H1 (cell line): ENCODE measurements at regions of chr12 and their contacts with region 1.

Region 1: GRCh38 chr12:6451348-6452244 is at the start of gene TAPBPL:
- DNase-seq: peak in 1 of 2 experiments; percentile 73
- H3K4me3 ChIP-seq: peak within 1 kb of the TSS in 3 of 4 experiments; percentile 7 to 42 (median 27); a peak in 4 of 8 replicates
- H3K27ac ChIP-seq: peak within 1 kb of the TSS; percentile 78
- H3K4me1 ChIP-seq: peaks cover 23 to 36% (median 31%) of the 10 kb centered on the region in 4 experiments
- H3K27me3 ChIP-seq: no peaks in the 10 kb centered on the region
- CTCF ChIP-seq: no peak
- EP300 ChIP-seq: no peak
- POLR2A ChIP-seq: no peak
- RAD21 ChIP-seq: no peak
- total RNA-seq, gene TAPBPL: 0.61 and 0.67 TPM in 2 replicates

Region 2: DNA sequence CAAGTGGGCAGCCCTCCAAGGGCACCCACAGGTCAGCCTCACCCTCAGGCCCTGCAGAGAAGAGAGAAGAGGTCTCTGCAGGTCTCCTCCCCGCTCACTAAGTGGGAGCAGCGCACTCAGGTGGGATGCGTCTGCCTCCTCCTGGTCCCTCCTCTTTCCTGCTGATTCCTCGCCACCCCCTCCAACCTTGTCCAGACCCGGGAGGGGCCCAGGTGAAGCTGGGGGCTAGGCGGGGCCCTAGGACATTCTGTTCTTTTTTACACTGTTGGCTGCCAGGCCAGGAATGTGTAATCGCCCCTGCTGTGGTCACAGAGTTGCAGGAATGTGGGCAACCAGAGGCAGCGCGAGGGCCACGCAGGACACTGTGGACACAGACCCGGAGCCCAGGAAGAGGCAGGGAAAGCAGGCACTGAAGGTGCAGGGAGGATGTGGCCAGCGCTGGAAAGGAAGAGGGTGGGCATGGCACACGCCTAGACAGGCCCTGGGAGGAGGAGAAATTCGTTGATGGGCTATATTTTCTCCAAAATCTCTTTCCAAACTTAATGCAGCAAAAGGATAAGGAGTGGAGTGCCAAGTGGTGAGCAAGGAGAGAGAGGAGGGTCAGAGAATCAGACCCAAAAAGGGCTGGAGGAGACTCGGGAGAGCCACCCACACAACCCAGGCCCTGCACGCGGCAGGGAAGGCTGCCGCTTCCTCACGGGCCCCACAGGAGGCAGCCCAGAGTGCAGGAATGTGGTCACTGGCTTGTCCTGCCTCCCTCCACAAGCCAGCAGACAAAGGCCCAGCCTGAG is 75.3 kb before region 1 on chr12:
- CTCF ChIA-PET with region 1: interaction called, 3 read pairs
- POLR2A ChIA-PET with region 1: interaction called, 24 read pairs
- DNase-seq: peak; percentile 54 to 74
- H3K4me3 ChIP-seq: peak overlapping the region; percentile 64 to 84 (median 74)
- H3K27ac ChIP-seq: peak overlapping the region; percentile 92
- H3K4me1 ChIP-seq: peaks cover 5 to 47% (median 33%) of the 10 kb centered on the region in 4 experiments
- H3K27me3 ChIP-seq: peaks cover 0 to 2% (median 0%) of the 10 kb centered on the region in 4 experiments; a peak in 2 of 7 replicates
- CTCF ChIP-seq: peak in 2 of 3 experiments; percentile 41 to 58; a peak in 3 of 4 replicates
- EP300 ChIP-seq: no peak
- POLR2A ChIP-seq: peak in 1 of 2 experiments; percentile 69; a peak in 2 of 3 replicates
- RAD21 ChIP-seq: peak; percentile 30 to 55

Region 3: DNA sequence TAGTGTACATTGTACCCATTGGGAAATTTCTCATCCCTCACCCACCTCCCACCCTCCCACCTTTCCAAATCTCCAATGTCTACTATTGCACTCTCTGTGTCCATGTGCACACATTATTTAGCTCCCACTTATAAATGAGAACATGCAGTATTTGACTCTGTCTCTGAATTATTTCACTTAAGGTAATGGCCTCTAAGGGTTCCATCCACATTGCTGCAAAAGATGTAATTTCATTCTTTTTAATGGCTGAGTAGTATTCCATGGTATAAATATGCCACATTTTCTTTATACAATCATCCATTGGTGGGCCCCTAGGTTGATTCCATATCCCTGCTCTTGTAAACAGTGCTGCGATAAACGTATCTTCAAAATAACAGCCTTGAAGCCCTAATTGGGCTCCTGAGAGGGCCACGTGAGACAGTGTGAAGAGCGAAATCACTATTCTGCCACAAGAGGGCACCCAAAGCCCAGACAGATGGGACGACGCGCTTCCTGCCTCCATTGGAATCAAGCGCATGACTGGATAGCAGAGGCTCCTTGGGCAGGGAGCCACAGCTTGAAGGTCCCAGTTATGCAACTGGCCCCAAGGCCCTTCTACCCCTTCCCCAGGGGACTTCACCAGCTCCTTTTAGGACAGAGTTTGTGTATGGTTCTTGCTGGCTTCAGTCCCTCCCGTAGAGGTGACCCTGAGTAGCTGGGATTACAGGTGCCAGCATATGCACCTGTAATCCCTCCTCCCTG is 28.2 kb before region 1 on chr12:
- CTCF ChIA-PET with region 1: interaction called, 202 read pairs
- POLR2A ChIA-PET with region 1: interaction called, 8 read pairs
- DNase-seq: peak; percentile 70 to 77
- H3K4me3 ChIP-seq: no peak overlapping the region
- H3K27ac ChIP-seq: no peak overlapping the region
- H3K4me1 ChIP-seq: peaks cover 0 to 4% (median under 1%) of the 10 kb centered on the region in 4 experiments; a peak in 2 of 7 replicates
- H3K27me3 ChIP-seq: no peaks in the 10 kb centered on the region; a peak in 1 of 7 replicates
- CTCF ChIP-seq: peak; percentile 84 to 96 (median 95)
- EP300 ChIP-seq: no peak
- POLR2A ChIP-seq: no peak
- RAD21 ChIP-seq: peak; percentile 97 to 99

Region 4: DNA sequence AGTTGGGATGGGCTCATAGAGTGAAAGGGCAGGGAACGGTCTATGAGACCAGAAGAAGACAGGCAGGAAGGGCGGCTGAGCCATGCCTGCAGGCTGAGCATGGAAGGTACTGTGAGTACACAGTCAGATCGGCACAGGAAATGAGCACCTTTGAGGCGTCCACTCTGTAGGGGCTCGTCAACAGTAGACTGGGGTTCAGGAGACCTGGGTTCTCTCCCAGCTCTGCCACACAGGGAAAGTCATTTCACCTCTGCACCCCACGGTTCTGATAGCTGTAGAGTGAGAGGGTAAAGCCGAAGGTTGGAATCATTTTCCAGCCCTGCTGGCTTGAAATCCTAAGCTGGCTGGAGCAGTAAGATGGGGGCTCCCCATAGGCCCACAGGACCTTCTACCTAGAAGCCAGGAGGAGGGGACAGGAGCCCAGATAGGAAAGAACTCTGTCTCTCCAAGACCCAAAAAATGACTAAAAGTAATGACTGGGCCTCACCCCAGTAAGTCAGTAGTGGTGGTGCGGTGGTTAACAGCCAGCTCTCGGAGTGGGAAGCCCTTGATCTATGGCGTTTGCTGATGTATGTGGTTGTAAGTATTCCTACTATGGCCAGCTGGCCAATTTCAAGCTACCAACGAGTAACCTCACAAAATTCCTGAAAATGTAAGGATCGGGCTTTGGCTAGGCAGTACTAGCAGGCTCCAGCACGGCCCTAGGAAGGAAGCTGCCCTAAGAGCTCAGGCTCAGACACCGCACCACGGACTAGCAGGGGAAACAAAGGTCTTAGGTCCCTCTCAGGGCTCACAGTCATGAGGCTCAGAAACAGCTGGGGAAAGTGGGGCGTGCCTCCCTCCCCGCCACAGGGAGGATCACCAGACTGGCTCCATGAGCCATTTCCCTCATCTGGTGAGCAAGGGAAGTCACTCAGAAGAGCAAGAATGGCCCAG is 17.1 kb before region 1 on chr12:
- CTCF ChIA-PET with region 1: interaction called, 4 read pairs
- POLR2A ChIA-PET with region 1: interaction called, 16 read pairs
- DNase-seq: no peak
- H3K4me3 ChIP-seq: no peak overlapping the region
- H3K27ac ChIP-seq: no peak overlapping the region
- H3K4me1 ChIP-seq: peaks cover 0 to 8% (median under 1%) of the 10 kb centered on the region in 4 experiments; a peak in 3 of 7 replicates
- H3K27me3 ChIP-seq: no peaks in the 10 kb centered on the region
- CTCF ChIP-seq: peak in 1 of 3 experiments; percentile 2; a peak in 1 of 4 replicates
- EP300 ChIP-seq: no peak
- POLR2A ChIP-seq: no peak
- RAD21 ChIP-seq: no peak

Region 5: DNA sequence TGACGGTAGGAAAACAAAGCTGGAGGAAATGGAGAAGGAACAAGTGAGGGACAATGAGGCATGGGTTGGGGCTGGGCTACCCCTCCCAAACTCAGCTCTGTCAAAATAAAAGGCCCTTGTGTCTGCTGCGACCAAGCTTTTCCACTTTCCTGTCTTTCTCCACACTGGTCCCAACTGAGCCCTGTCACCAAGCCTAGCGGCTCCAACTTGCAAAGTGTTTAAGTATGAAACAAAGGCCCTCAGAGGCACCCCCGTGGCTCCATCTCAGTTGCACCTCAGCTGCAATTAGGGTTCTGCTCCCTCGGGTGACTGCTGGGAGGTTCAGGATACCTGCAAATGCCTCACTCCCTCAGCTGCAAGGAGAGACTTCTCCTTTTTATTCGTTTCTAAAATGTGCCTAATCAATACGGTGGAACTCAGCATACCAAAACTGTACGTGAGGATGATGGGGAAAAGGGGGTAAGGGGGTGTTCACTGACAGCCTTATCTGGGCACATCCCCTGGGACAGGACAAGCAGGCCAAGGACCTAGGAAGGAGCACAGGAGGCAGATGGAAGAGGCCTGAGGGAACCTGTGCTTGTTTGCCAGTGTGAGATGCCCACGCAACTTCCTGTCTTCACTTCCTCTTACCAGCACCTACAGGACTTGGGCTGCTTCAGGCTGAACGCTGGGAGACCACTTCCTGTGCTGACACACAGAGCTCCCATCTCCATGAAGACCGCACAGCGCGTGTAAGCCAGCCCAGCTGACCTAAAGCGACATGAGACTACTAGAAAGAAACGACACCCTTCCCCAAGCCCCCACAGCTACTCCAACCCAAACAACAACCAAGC is 10.0 kb after region 1 on chr12:
- CTCF ChIA-PET with region 1: interaction called, 36 read pairs
- POLR2A ChIA-PET with region 1: interaction called, 34 read pairs
- DNase-seq: no peak
- H3K4me3 ChIP-seq: no peak overlapping the region
- H3K27ac ChIP-seq: no peak overlapping the region
- H3K4me1 ChIP-seq: no peaks in the 10 kb centered on the region
- H3K27me3 ChIP-seq: no peaks in the 10 kb centered on the region
- CTCF ChIP-seq: no peak
- EP300 ChIP-seq: no peak
- POLR2A ChIP-seq: no peak
- RAD21 ChIP-seq: no peak

Region 6: DNA sequence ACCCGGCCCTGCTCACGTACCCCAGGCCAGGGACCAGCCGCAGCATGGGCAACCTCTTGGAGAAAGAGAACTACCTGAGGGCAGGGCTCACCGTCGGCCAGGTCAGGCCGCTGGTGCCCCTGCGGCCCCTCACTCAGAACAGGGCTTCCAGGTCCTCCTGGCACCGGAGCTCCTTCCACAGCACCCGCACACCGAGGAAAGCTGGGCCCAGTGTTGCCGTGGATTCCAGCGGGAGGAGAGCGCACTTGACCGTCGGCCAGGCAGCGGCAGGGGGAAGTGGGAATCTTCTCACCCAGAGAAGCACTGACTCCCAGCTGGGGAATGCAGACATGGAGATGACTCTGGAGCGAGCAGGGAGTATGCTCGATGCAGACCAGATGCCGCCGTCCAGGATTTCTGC is 26.8 kb after region 1 on chr12:
- CTCF ChIA-PET with region 1: no interaction called
- POLR2A ChIA-PET with region 1: no interaction called
- DNase-seq: no peak
- H3K4me3 ChIP-seq: no peak overlapping the region
- H3K27ac ChIP-seq: no peak overlapping the region
- H3K4me1 ChIP-seq: no peaks in the 10 kb centered on the region
- H3K27me3 ChIP-seq: no peaks in the 10 kb centered on the region
- CTCF ChIP-seq: no peak
- EP300 ChIP-seq: no peak
- POLR2A ChIP-seq: no peak
- RAD21 ChIP-seq: no peak

Region 7: GRCh38 chr12:6524648-6525047 is 73.1 kb after region 1 on chr12:
- CTCF ChIA-PET with region 1: no interaction called
- POLR2A ChIA-PET with region 1: no interaction called
- DNase-seq: no peak
- H3K4me3 ChIP-seq: no peak overlapping the region
- H3K27ac ChIP-seq: no peak overlapping the region
- H3K4me1 ChIP-seq: peaks cover 0 to 1% (median 0%) of the 10 kb centered on the region in 4 experiments; a peak in 1 of 7 replicates
- H3K27me3 ChIP-seq: no peaks in the 10 kb centered on the region
- CTCF ChIP-seq: no peak
- EP300 ChIP-seq: no peak
- POLR2A ChIP-seq: no peak
- RAD21 ChIP-seq: no peak

Region 8: GRCh38 chr12:6944381-6945186 is 493.0 kb after region 1 on chr12:
- CTCF ChIA-PET with region 1: no interaction called
- POLR2A ChIA-PET with region 1: no interaction called
- DNase-seq: no peak
- H3K4me3 ChIP-seq: peak overlapping the region; percentile 57 to 91 (median 83)
- H3K27ac ChIP-seq: peak overlapping the region; percentile 89
- H3K4me1 ChIP-seq: peaks cover 6 to 20% (median 14%) of the 10 kb centered on the region in 4 experiments
- H3K27me3 ChIP-seq: no peaks in the 10 kb centered on the region
- CTCF ChIP-seq: peak in 2 of 3 experiments; percentile 91 to 98; a peak in 3 of 4 replicates
- EP300 ChIP-seq: peak in 1 of 2 experiments; percentile 42; a peak in 1 of 3 replicates
- POLR2A ChIP-seq: no peak
- RAD21 ChIP-seq: peak; percentile 83 to 89